ENCODE measurements at regions of chr10 and their contacts with region 1.

Region 1: DNA sequence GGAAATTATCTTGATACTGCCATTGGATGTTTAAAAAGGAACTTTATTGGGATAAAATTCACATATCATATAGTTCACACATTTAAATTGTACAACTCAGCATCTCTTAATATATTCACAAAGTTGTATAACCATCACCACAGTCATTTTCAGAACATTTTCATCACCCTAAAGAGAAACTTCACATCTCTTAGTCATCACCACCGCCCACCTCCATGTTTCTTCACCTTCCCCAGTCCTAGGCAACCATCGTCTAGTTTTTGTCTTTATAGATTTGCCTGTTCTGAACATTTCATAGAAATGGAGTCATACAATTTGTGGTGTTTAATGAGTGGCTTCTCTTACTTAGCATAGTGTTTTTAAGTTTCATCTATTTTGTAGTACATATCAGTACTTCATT is 96.6 kb downstream of the ANKRD30A start:
- DNase-seq: no peak
- H3K4me3 Mint-ChIP-seq: no peak overlapping the region
- H3K27ac Mint-ChIP-seq: no peak overlapping the region
- H3K4me1 Mint-ChIP-seq: no peaks in the 10 kb centered on the region
- H3K27me3 Mint-ChIP-seq: no peaks in the 10 kb centered on the region

Region 2: GRCh38 chr10:37206132-37206531 is 15.9 kb before region 1 on chr10:
- intact Hi-C with region 1: loop called (anchors 1 kb)
- DNase-seq: no peak
- H3K4me3 Mint-ChIP-seq: no peak overlapping the region
- H3K27ac Mint-ChIP-seq: no peak overlapping the region
- H3K4me1 Mint-ChIP-seq: no peaks in the 10 kb centered on the region
- H3K27me3 Mint-ChIP-seq: no peaks in the 10 kb centered on the region

Region 3: DNA sequence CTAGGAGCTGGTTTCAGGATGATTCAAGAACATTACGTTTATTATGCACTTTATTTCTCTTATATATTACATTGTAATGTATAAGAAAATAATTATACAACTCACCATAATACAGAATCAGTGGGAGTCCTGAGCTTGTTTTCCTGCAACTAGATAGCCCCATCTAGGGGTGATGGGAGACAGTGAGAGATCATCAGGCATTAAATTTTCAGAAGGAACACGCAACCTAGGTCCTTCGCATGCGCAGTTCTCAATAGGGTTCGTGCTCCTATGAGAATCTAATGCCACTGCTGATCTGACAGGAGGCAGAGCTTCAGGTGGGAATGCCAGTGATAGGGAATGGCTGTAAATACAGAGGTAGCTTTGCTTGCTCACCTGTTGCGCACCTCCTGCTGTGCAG is 41.3 kb after region 1 on chr10:
- intact Hi-C with region 1: no loop called
- DNase-seq: no peak
- H3K4me3 Mint-ChIP-seq: no peak overlapping the region
- H3K27ac Mint-ChIP-seq: no peak overlapping the region
- H3K4me1 Mint-ChIP-seq: no peaks in the 10 kb centered on the region
- H3K27me3 Mint-ChIP-seq: peaks cover 2% of the 10 kb centered on the region

Measured in activated T-helper 1 cell treated with anti-CD3 and anti-CD28 coated beads, Interleukin-12 subunit alpha, Interleukin-12 subunit beta, Interleukin-2, Interleukin-4 antibody, amounts not matched to agents 30 ng/mL and 10 ng/mL and 1 ng/mL, durations not matched to agents 14 hours and 24 hours and 36 hours (primary cell).